HepG2 (cell line): ENCODE measurements at regions of chr6 and their contacts with region 1.

Region 1: DNA sequence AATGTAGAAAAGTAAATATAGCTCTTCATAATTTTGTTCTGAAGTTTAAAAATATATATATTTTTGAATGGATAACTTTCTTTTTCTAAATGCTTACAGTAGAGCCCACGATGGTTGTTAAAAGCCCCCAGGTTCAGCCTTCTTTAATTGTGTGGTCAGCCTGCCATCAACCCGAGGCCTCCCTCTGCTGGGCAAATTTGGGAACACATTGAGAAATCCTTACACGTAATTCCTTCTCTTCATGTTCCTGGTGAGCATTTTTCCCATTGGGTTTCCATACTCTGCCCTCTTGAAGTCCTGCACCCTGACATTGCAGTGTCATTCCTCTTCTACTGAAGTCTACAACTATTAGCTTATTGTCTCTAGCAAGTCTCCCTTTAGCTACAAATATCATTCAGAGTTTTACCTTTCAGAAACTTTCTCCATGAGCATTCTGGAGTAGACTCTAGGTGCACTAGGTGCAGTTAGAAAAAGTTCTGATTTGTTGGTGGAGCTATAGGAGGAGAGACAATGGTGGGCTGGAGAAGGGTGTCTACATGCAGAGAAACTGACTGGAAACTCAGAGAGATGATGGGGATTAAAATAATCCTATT is 40.6 kb downstream of the TRIM38 start:
- DNase-seq: peak; percentile 63
- ATAC-seq: peak; percentile 82
- H3K4me3 ChIP-seq: no peak overlapping the region
- H3K27ac ChIP-seq: no peak overlapping the region
- H3K4me1 ChIP-seq: no peaks in the 10 kb centered on the region
- H3K27me3 ChIP-seq: no peaks in the 10 kb centered on the region
- CTCF ChIP-seq: peak; percentile 79
- EP300 ChIP-seq: no peak
- POLR2A ChIP-seq: no peak
- RAD21 ChIP-seq: 0 out of 2 replicates have a peak, but pooled peaks have one; percentile 30

Region 2: GRCh38 chr6:25788305-25788922 is 214.8 kb before region 1 on chr6:
- CTCF ChIA-PET with region 1: interaction called, 5 read pairs
- POLR2A ChIA-PET with region 1: no interaction called
- in situ Hi-C with region 1: no loop called
- intact Hi-C with region 1: loop called (anchors 1 kb)
- DNase-seq: peak; percentile 72
- ATAC-seq: peak; percentile 99
- H3K4me3 ChIP-seq: no peak overlapping the region
- H3K27ac ChIP-seq: no peak overlapping the region
- H3K4me1 ChIP-seq: no peaks in the 10 kb centered on the region; the same call in 1 of the 2 replicates
- H3K27me3 ChIP-seq: no peaks in the 10 kb centered on the region
- CTCF ChIP-seq: peak; percentile 85
- EP300 ChIP-seq: no peak
- POLR2A ChIP-seq: no peak
- RAD21 ChIP-seq: peak; percentile 85

Region 3: DNA sequence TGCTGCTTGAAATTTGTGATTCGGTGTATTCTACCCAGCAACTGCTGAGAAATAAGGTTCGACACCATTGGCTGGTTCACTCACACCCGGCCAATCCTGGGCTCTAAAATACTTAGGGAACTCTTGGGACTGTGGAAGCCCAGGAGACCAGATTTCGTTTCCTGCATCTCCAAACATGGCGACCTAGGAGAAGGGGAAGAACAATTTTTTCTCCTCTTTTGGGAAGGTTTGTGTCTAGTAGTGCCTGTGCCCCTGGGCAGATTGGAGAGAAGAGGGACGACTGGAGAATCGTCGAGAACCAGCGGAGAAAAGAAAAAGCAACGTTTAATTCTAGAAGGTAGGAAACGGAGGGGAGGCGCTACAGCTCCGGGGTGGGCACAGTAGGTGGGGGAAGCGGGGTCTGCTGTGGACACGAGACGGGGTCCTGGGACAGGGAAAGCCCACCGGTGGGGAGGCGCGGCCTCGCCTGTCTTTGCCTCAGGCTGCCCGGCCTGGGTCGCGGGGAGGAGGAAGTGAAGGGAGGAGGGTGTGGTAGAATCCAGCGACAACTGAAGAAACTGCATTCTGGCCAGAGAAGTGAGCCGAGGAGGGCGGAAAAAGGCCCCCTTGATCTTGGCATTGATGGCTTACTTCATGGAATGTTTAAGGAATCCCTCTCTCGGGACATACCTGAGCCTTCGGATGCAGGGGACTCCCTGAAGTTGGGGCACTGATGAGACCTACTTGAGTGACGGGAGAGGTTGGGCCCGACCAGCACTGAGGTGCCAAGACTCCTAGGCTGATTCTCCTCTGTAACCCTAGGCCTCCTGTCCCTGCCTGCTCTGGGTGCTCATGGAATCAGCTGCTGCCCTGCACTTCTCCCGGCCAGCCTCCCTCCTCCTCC is 454.8 kb after region 1 on chr6 and contains the start of gene BTN2A1:
- CTCF ChIA-PET with region 1: no interaction called
- POLR2A ChIA-PET with region 1: no interaction called
- in situ Hi-C with region 1: no loop called
- intact Hi-C with region 1: no loop called
- DNase-seq: peak; percentile 94
- ATAC-seq: peak; percentile 100
- H3K4me3 ChIP-seq: peak within 1 kb of the TSS; percentile 87 to 93 (median 88)
- H3K27ac ChIP-seq: peak within 1 kb of the TSS; percentile 69
- H3K4me1 ChIP-seq: peaks cover 37% of the 10 kb centered on the region
- H3K27me3 ChIP-seq: no peaks in the 10 kb centered on the region; a peak in 1 of 5 replicates
- CTCF ChIP-seq: peak; percentile 57
- EP300 ChIP-seq: no peak
- POLR2A ChIP-seq: peak; percentile 60 to 71
- RAD21 ChIP-seq: 0 out of 2 replicates have a peak, but pooled peaks have one; percentile 11
- total RNA-seq, gene BTN2A1: 9.1 and 16.4 TPM in 2 replicates